HEK293 (cell line): ENCODE measurements at regions of chr6 and their contacts with region 1.

Region 1: DNA sequence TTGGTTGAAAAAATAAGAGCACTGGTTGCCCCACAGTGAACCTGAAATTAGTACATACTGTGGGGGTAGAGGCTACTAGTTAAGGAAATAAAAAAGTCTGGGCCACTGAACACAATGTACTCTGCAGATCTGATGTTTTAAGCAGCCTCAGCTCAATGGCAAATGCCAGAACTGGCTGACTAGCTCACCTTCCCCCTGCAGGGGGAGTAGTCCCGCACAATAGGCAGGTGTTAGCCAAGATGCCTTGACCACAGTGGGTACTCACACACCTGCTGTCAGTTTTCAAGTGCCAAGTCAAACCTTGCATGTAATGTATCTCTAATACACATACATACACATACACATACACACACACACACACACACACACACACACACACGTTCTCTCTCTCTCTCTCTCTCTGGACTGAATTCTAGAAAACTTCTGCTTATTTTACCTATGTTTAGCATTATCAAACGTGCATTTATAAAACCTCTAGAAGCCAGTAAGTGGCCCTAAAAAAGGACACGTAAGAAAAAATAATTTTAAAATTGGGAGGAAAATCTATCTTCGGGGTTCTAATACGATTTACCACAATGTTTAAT is 36.1 kb downstream of the GMDS start:
- H3K4me3 ChIP-seq: no peak overlapping the region
- H3K27ac ChIP-seq: no peak overlapping the region
- H3K4me1 ChIP-seq: peaks cover 6% of the 10 kb centered on the region; the same call in 1 of the 2 replicates
- CTCF ChIP-seq: peak; percentile 78

Region 2: GRCh38 chr6:2120912-2121311 is 88.4 kb before region 1 on chr6:
- CTCF ChIA-PET with region 1: interaction called, 12 read pairs
- POLR2A ChIA-PET with region 1: no interaction called
- H3K4me3 ChIP-seq: no peak overlapping the region
- H3K27ac ChIP-seq: no peak overlapping the region
- H3K4me1 ChIP-seq: no peaks in the 10 kb centered on the region
- CTCF ChIP-seq: no peak

Region 3: GRCh38 chr6:2196079-2196679 is 13.1 kb before region 1 on chr6:
- CTCF ChIA-PET with region 1: interaction called, 35 read pairs
- POLR2A ChIA-PET with region 1: no interaction called
- H3K4me3 ChIP-seq: no peak overlapping the region
- H3K27ac ChIP-seq: no peak overlapping the region
- H3K4me1 ChIP-seq: no peaks in the 10 kb centered on the region
- CTCF ChIP-seq: no peak; the same call in 1 of the 2 replicates

Region 4: DNA sequence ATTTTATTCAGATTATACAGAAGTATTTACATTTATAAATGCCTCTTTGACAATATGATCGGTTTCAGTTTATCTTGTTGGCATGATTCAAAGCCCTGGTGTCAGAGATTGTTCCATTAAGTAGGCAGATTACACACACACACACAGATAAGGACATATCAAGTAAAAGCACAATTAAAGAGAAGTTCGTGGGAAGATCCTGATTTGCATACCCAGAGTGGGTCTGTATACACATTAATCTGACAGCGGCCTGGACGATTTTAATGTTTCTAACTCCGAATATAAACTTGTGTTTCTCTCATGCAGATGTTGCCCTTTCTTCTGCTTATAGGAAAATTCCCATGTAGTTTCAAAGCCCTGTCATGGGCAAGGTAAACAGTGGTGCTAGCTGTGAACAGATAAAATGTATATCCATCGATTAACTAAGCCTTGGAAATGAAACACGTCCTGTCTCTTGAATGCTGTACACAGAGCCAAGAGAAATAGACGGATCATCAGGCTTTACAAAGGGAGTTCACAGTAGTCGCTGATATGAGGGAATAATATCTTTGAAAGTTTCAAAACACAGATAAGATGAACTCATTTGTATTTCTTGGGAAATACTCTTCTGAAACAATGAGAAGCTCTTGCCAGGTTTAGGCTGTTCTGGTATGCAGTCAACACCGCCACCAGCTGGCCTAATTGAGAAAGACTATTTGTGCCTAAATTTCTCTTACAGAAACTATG is 144.3 kb after region 1 on chr6:
- CTCF ChIA-PET with region 1: interaction called, 49 read pairs
- POLR2A ChIA-PET with region 1: no interaction called
- H3K4me3 ChIP-seq: no peak overlapping the region
- H3K27ac ChIP-seq: peak overlapping the region; percentile 52; the same call in 1 of the 2 replicates
- H3K4me1 ChIP-seq: peaks cover 7% of the 10 kb centered on the region
- CTCF ChIP-seq: peak; percentile 48

Region 5: DNA sequence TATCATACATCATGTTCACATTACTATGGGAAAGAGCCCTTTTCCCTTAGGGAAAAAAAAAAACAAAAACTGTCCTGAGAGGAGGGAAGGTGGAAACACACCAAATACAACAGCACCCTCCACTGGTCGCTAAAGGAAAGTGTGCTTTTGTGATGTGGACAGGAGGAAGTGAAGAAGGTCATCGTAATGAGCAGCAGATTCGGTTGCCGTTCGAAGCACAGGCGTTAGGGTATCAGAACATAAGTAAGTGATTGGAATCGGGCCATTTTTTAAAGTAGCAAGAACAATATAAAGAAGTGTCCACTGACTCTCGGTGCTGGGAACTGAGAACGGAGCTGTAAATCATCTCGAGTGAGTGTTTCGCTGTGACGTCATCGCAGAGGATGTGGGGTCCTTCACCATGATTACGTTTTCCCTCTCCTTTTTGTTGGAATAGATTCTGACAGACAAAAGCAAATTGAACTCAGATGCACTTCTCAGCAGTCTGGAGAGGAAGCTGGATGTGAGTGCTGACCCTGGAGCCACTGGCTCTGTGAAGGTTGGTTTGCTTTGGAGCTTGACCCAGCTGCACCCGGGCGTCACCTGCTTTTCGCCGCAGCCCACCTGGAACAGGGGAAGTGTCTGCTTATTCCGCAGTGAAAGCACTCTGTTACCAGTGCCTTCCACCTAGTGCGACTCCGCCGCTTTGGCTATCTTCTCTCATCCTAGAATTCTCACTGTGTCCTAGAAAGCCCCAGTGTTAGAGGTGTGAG is 239.7 kb after region 1 on chr6:
- CTCF ChIA-PET with region 1: interaction called, 28 read pairs
- POLR2A ChIA-PET with region 1: no interaction called
- H3K4me3 ChIP-seq: peak overlapping the region; percentile 20
- H3K27ac ChIP-seq: no peak overlapping the region
- H3K4me1 ChIP-seq: peaks cover 13% of the 10 kb centered on the region
- CTCF ChIP-seq: peak; percentile 87